Breast epithelium (tissue), 4 donors: ENCODE measurements at regions of chr11 and their contacts with region 1.

Region 1: GRCh38 chr11:76807206-76807875 is 24.2 kb downstream of the TSKU start:
- DNase-seq: peak; percentile 74 to 85
- H3K4me3 ChIP-seq: peak overlapping the region in 1 of 3 donors; percentile 43
- H3K27ac ChIP-seq: peak overlapping the region; percentile 35 to 49
- H3K4me1 ChIP-seq: no peaks in the 10 kb centered on the region
- H3K27me3 ChIP-seq: no peaks in the 10 kb centered on the region
- CTCF ChIP-seq: peak; percentile 51 to 87 (median 80)
- POLR2A ChIP-seq: no peak

Region 2: GRCh38 chr11:77066229-77067042 is 259.1 kb after region 1 on chr11 and contains the start of gene CAPN5:
- intact Hi-C with region 1: loop called (anchors 10 kb)
- DNase-seq: peak; percentile 78 to 80
- H3K4me3 ChIP-seq: peak within 1 kb of the TSS; percentile 65 to 94 (median 66)
- H3K27ac ChIP-seq: peak within 1 kb of the TSS; percentile 84 to 98
- H3K4me1 ChIP-seq: no peaks in the 10 kb centered on the region
- H3K27me3 ChIP-seq: no peaks in the 10 kb centered on the region
- CTCF ChIP-seq: peak in 1 of 3 donors; percentile 28
- POLR2A ChIP-seq: peak; percentile 81
- total RNA-seq, gene CAPN5: 2.8 to 6.1 (median 3.6) TPM

Region 3: GRCh38 chr11:77236901-77237300 is 429.6 kb after region 1 on chr11:
- intact Hi-C with region 1: loop called (anchors 5 kb)
- DNase-seq: no peak
- H3K4me3 ChIP-seq: no peak overlapping the region
- H3K27ac ChIP-seq: no peak overlapping the region
- H3K4me1 ChIP-seq: no peaks in the 10 kb centered on the region
- H3K27me3 ChIP-seq: no peaks in the 10 kb centered on the region
- CTCF ChIP-seq: no peak
- POLR2A ChIP-seq: no peak